Activated CD8-positive, alpha-beta T cell treated with anti-CD3 and anti-CD28 coated beads for 36 hours (primary cell): ENCODE measurements at regions of chr13 and their contacts with region 1.

Region 1: GRCh38 chr13:110615322-110616102 is at the start of gene NAXD:
- DNase-seq: peak; percentile 93
- ATAC-seq: peak; percentile 89
- H3K4me3 Mint-ChIP-seq: peak within 1 kb of the TSS; percentile 92
- H3K27ac Mint-ChIP-seq: peak within 1 kb of the TSS; percentile 96
- H3K4me1 Mint-ChIP-seq: peaks cover 44% of the 10 kb centered on the region
- H3K27me3 Mint-ChIP-seq: no peaks in the 10 kb centered on the region
- CTCF ChIP-seq: no peak
- total RNA-seq, gene NAXD: 22.7 to 24.8 TPM

Region 2: GRCh38 chr13:110605132-110605531 is 10.4 kb before region 1 on chr13:
- CTCF ChIA-PET with region 1: no interaction called
- POLR2A ChIA-PET with region 1: no interaction called
- intact Hi-C with region 1: no loop called
- DNase-seq: no peak
- ATAC-seq: no peak
- H3K4me3 Mint-ChIP-seq: no peak overlapping the region
- H3K27ac Mint-ChIP-seq: no peak overlapping the region
- H3K4me1 Mint-ChIP-seq: no peaks in the 10 kb centered on the region
- H3K27me3 Mint-ChIP-seq: peaks cover 7% of the 10 kb centered on the region
- CTCF ChIP-seq: no peak

Region 3: GRCh38 chr13:110705826-110706569 is 90.5 kb after region 1 on chr13 and contains the start of gene CARS2:
- CTCF ChIA-PET with region 1: no interaction called
- POLR2A ChIA-PET with region 1: interaction called, 3 read pairs
- intact Hi-C with region 1: loop called (anchors 5 kb)
- DNase-seq: peak; percentile 95
- ATAC-seq: peak; percentile 96
- H3K4me3 Mint-ChIP-seq: peak within 1 kb of the TSS; percentile 90
- H3K27ac Mint-ChIP-seq: peak within 1 kb of the TSS; percentile 90
- H3K4me1 Mint-ChIP-seq: peaks cover 30% of the 10 kb centered on the region
- H3K27me3 Mint-ChIP-seq: no peaks in the 10 kb centered on the region
- CTCF ChIP-seq: no peak
- total RNA-seq, gene CARS2: 60.7 to 63.0 TPM

Region 4: DNA sequence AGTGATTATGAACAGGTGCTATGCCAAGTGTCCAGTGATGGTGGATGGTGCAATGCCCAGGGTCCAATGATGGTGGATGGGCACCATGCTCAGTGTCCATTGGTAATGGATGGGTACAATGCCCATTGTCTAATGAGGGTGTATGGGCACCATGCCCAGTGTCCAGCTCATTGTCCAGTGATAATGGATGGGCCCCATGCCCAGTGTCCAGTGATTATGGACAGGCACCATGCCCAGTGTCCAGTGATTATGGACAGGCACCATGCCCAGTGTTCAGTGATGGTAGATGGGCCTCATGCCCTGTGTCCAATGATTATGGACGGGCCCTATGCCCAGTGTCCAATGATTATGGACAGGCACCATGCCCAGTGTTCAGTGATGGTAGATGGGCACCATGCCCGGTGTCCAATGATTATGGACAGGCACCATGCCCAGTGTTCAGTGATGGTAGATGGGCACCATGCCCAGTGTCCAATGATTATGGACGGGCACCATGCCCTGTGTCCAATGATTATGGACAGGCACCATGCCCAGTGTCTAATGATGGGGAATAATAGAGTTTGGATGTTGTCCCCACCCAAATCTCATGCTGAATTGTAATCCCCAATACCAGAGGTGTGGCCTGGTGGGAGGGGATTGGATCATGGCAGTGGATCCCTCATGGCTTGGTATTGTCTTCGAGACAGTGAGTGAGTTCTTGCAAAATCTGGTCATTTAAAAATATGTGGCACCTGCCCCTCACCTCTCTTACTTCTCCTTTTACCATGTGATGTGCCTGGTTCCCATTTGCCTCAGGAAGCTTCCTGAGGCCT is 211.6 kb after region 1 on chr13:
- CTCF ChIA-PET with region 1: no interaction called
- POLR2A ChIA-PET with region 1: no interaction called
- intact Hi-C with region 1: no loop called
- DNase-seq: no peak
- ATAC-seq: no peak
- H3K4me3 Mint-ChIP-seq: no peak overlapping the region
- H3K27ac Mint-ChIP-seq: no peak overlapping the region
- H3K4me1 Mint-ChIP-seq: peaks cover 5% of the 10 kb centered on the region
- H3K27me3 Mint-ChIP-seq: no peaks in the 10 kb centered on the region
- CTCF ChIP-seq: no peak